ENCODE measurements at regions of chr10 and their contacts with region 1.

Region 1: DNA sequence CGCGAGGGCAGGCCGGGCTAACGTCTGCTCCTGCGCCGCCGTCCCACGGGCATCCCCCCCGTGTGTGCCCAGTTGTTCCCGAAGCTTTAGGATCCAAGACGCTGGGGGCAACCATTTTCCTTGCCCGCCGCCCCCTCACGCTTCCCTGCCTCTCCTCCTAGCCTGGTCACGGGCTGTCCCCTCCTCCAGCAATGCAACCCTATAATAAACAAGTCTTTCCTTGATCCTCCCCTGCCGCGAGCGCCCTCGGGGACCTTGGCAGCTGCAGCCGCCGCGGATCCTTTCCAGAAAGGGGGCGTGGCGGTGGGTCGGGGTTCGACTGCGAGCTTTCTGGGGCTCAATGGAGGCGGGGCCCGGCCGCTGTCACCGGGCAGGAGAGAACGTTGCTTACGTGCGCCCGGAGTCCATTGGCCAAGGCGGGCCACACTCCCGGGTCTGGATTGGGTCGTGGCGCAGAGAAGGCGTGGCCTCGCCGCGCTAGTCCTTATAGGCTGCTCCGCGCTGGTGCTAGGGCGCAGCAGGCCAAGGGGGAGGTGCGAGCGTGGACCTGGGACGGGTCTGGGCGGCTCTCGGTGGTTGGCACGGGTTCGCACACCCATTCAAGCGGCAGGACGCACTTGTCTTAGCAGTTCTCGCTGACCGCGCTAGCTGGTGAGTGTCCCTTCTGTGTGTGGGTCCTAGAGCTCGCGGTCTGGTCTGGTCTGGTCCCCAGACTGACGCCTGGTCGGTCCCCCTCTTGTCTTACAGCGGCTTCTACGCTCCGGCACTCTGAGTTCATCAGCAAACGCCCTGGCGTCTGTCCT is at the start of gene DDIT4:
- DNase-seq: peak; percentile 100
- ATAC-seq: peak; percentile 92
- H3K4me3 Mint-ChIP-seq: peak within 1 kb of the TSS; percentile 95
- H3K27ac Mint-ChIP-seq: peak within 1 kb of the TSS; percentile 99
- H3K4me1 Mint-ChIP-seq: peaks cover 46% of the 10 kb centered on the region
- H3K27me3 Mint-ChIP-seq: no peaks in the 10 kb centered on the region; the same call in 1 of the 2 replicates
- CTCF ChIP-seq: no peak
- total RNA-seq, gene DDIT4: 118 to 158 TPM (median 153 TPM) in 3 replicates

Region 2: DNA sequence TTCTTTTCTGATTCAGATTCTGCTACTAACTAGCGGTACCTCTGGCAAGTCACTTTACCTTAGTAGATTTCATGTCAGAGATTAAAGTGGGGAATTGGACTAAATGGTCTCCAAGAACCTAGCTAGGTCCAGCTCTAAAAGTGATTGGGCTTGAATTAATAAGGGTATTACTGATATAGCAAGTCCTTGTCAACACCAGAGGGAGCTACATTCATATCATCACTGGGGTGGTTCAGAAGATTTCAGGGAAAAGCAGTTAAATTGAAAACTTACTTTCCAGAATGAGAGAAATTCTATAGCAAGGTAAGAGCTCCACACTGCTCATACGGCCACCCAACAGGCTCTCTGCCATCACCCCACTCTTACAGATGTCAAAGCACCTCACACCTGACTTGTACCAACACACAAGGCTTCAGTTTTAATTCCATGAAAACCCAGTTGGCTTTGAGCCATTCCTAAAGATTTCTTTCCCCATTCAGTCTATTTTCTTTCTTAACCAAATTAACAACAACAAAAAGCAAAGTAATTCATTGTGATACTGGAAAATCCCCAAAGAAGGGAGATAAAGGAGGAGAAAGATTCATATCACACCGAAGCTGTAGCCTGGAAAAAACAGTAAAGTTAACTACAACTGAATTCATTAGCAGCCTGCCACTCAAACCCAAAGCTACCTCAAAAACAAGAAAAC is 147.3 kb before region 1 on chr10:
- CTCF ChIA-PET with region 1: interaction called, 11 read pairs
- POLR2A ChIA-PET with region 1: interaction called, 6 read pairs
- DNase-seq: no peak
- ATAC-seq: peak; percentile 60; the same call in 1 of the 2 replicates
- H3K4me3 Mint-ChIP-seq: no peak overlapping the region
- H3K27ac Mint-ChIP-seq: peak overlapping the region; percentile 55
- H3K4me1 Mint-ChIP-seq: peaks cover 12% of the 10 kb centered on the region
- H3K27me3 Mint-ChIP-seq: no peaks in the 10 kb centered on the region
- CTCF ChIP-seq: no peak

Region 3: GRCh38 chr10:72254813-72255568 is 18.6 kb before region 1 on chr10:
- CTCF ChIA-PET with region 1: interaction called, 75 read pairs
- POLR2A ChIA-PET with region 1: interaction called, 182 read pairs
- DNase-seq: peak; percentile 78
- ATAC-seq: peak; percentile 94
- H3K4me3 Mint-ChIP-seq: peak overlapping the region; percentile 57
- H3K27ac Mint-ChIP-seq: peak overlapping the region; percentile 98
- H3K4me1 Mint-ChIP-seq: peaks cover 41% of the 10 kb centered on the region
- H3K27me3 Mint-ChIP-seq: no peaks in the 10 kb centered on the region
- CTCF ChIP-seq: no peak

Region 4: DNA sequence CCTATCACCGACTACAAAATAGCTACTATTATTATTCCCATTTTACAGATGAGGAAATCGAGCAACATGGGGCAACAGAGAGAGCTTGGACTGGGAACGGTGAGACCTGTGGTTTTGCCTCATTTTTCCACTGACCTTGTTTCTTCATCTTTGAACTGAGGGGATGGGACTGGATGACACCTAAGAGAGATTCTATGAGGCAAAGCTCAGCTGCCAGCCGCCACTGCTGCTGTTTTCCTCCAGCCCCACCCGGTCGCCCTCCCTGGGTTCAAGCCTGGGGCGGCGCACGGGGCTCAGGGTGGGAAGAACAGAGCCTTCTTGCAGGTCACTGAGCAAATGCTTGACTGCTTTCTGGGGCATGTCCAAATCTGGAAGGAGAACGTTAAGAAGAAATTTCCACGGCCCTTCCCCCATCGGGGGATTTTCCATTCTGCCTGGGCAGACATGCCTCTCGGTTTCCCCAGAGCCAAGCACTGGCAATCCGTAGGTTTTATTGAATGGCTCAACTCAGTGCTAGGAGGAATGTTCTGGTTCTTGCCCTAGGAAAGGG is 12.4 kb after region 1 on chr10:
- CTCF ChIA-PET with region 1: interaction called, 5 read pairs
- POLR2A ChIA-PET with region 1: interaction called, 13 read pairs
- DNase-seq: no peak
- ATAC-seq: no peak
- H3K4me3 Mint-ChIP-seq: no peak overlapping the region
- H3K27ac Mint-ChIP-seq: peak overlapping the region; percentile 85; the same call in 1 of the 2 replicates
- H3K4me1 Mint-ChIP-seq: peaks cover 14% of the 10 kb centered on the region
- H3K27me3 Mint-ChIP-seq: peaks cover 3% of the 10 kb centered on the region; the same call in 1 of the 2 replicates
- CTCF ChIP-seq: no peak

Region 5: DNA sequence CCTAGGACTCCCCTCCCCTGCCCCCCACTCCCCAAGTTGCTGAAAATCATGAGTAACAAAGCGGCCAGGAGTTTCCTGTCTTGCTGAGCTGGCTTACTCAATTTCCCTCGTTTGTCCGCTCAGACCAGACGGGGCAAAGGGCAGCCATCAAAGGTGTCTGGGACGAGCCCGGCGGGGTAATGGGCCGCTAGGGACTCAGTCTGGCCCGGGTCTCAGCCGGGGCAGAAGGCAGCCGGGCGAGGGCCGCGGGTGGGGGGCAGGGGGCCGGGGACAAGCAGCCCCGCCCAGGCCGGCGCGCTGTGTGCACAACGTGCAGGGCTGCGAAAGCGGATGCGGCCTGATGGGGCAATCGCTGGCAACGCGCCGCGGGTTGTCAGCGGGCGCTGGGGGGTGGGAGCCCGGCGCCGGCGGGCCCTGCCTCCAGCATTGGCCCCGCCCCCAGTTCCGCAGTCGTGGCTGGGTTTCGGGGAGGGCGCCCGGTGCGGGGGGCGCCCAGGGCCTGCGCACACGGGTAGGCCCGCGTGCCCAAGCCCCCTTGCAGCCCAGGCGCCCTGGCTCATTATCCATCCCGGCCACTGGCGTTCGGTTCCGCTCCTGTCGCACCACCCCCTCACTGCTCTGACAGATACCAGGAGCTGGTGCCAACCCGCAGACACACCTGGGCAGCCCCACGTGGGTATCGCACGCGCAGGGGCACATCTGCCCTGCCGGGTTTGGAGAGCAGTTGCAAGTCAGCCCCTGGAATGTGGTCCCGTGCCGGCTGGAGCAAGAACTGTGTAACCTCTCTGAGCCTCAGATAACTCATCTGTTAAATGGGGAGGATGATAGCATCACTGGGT is 46.0 kb after region 1 on chr10:
- CTCF ChIA-PET with region 1: interaction called, 21 read pairs
- POLR2A ChIA-PET with region 1: interaction called, 161 read pairs
- DNase-seq: peak; percentile 83
- ATAC-seq: peak; percentile 67
- H3K4me3 Mint-ChIP-seq: peak overlapping the region; percentile 41
- H3K27ac Mint-ChIP-seq: peak overlapping the region; percentile 96
- H3K4me1 Mint-ChIP-seq: peaks cover 55% of the 10 kb centered on the region
- H3K27me3 Mint-ChIP-seq: no peaks in the 10 kb centered on the region; the same call in 1 of the 2 replicates
- CTCF ChIP-seq: no peak

Region 6: DNA sequence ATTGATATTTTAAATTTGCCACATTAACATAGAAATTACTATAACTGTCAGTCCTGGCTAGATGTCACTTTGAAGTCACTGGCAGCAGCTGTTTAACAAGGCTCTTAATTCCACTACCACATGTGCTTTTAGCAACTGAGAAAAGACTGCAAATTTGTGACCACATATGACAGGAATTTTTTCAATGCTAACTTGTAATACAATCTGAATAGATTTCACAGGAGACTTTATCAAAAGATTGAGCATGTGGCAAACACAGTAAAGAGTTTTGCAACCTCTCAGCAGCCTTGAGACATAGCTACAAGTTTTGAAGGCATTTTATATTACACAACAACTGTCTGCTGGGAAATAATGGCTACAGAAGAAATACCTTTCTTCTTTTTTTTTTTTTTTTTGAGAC is 279.2 kb after region 1 on chr10:
- CTCF ChIA-PET with region 1: no interaction called
- POLR2A ChIA-PET with region 1: no interaction called
- DNase-seq: no peak
- ATAC-seq: no peak
- H3K4me3 Mint-ChIP-seq: no peak overlapping the region
- H3K27ac Mint-ChIP-seq: no peak overlapping the region
- H3K4me1 Mint-ChIP-seq: no peaks in the 10 kb centered on the region
- H3K27me3 Mint-ChIP-seq: no peaks in the 10 kb centered on the region
- CTCF ChIP-seq: no peak

Measured in WTC11 (cell line).